ENCODE measurements at regions of chr1 and their contacts with region 1.

Region 1: GRCh38 chr1:223123011-223123610 is 19.9 kb downstream of the TLR5 start:
- DNase-seq: no peak
- ATAC-seq: no peak
- H3K4me3 Mint-ChIP-seq: peak overlapping the region; percentile 20; the same call in 1 of the 2 replicates
- H3K27ac Mint-ChIP-seq: no peak overlapping the region
- H3K4me1 Mint-ChIP-seq: peaks cover 33% of the 10 kb centered on the region
- H3K27me3 Mint-ChIP-seq: peaks cover 13% of the 10 kb centered on the region
- CTCF ChIP-seq: no peak

Region 2: DNA sequence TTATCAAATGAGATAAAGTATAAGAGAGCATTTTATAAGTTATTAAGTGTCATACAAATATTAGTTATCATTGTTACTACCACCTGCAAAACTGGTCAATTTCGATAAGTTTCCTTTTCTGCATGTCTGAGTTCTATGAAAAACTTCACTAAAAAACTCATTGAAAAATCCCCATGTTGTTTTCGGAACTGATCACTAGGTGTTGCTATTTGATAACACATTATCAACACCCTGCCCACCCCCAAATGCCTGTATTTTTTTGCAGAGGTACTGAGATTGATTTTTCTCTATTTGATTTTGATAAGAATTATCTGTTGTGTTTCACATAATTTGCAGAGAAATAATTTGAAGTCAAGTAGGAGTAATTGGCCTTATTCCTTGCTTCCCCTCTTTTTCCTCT is 330.4 kb before region 1 on chr1:
- CTCF ChIA-PET with region 1: interaction called, 19 read pairs
- POLR2A ChIA-PET with region 1: no interaction called
- DNase-seq: no peak
- ATAC-seq: peak; percentile 58
- H3K4me3 Mint-ChIP-seq: no peak overlapping the region
- H3K27ac Mint-ChIP-seq: no peak overlapping the region
- H3K4me1 Mint-ChIP-seq: peaks cover 7% of the 10 kb centered on the region; the same call in 1 of the 2 replicates
- H3K27me3 Mint-ChIP-seq: peaks cover 26% of the 10 kb centered on the region
- CTCF ChIP-seq: 0 out of 2 replicates have a peak, but pooled peaks have one; percentile 13

Region 3: GRCh38 chr1:223081181-223081994 is 41.7 kb before region 1 on chr1:
- CTCF ChIA-PET with region 1: interaction called, 12 read pairs
- POLR2A ChIA-PET with region 1: no interaction called
- DNase-seq: peak; percentile 95
- ATAC-seq: peak; percentile 93
- H3K4me3 Mint-ChIP-seq: no peak overlapping the region
- H3K27ac Mint-ChIP-seq: peak overlapping the region; percentile 75; the same call in 1 of the 2 replicates
- H3K4me1 Mint-ChIP-seq: peaks cover 33% of the 10 kb centered on the region
- H3K27me3 Mint-ChIP-seq: peaks cover 72% of the 10 kb centered on the region
- CTCF ChIP-seq: peak; percentile 82

Region 4: GRCh38 chr1:223142795-223143536 is 19.9 kb after region 1 on chr1 and contains the start of gene TLR5:
- CTCF ChIA-PET with region 1: interaction called, 34 read pairs
- POLR2A ChIA-PET with region 1: no interaction called
- DNase-seq: peak; percentile 87
- ATAC-seq: peak; percentile 92
- H3K4me3 Mint-ChIP-seq: peak within 1 kb of the TSS; percentile 68
- H3K27ac Mint-ChIP-seq: no peak within 1 kb of the TSS
- H3K4me1 Mint-ChIP-seq: peaks cover 20% of the 10 kb centered on the region
- H3K27me3 Mint-ChIP-seq: peaks cover 48% of the 10 kb centered on the region
- CTCF ChIP-seq: peak; percentile 50
- total RNA-seq, gene TLR5: 0.46 to 1.1 TPM (median 0.73 TPM) in 3 replicates

Region 5: DNA sequence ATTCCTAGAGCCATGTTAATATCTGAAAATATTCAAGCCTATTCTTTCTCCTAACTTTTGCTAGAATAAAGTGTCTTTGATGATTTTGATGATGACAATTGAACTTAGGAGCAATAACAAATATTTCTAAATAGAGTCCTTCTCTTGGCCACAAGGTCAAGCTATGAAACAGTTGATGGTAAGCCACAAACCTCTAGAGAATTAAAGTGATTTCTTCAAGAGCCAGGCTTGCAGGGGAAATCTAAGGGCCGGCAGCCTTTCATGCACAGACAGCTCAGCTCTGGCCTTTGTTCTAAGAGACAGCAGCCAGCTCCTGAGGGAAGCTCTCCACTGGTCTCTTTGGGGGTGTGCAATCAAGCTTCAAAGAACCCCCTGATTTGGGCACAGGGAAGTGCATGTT is 181.8 kb after region 1 on chr1:
- CTCF ChIA-PET with region 1: no interaction called
- POLR2A ChIA-PET with region 1: no interaction called
- DNase-seq: no peak
- ATAC-seq: no peak
- H3K4me3 Mint-ChIP-seq: no peak overlapping the region
- H3K27ac Mint-ChIP-seq: no peak overlapping the region
- H3K4me1 Mint-ChIP-seq: no peaks in the 10 kb centered on the region
- H3K27me3 Mint-ChIP-seq: peaks cover 3% of the 10 kb centered on the region
- CTCF ChIP-seq: no peak

Measured in WTC11 (cell line).